Naive thymus-derived CD4-positive, alpha-beta T cell (primary cell): ENCODE measurements at regions of chr18 and their contacts with region 1.

Region 1: GRCh38 chr18:23619388-23619881 is 33.1 kb upstream of the NPC1 start:
- DNase-seq: peak in 2 of 9 donors; percentile 10 to 11
- ATAC-seq: peak; percentile 51
- H3K4me3 ChIP-seq: peak overlapping the region; percentile 35
- H3K4me3 Mint-ChIP-seq: peak overlapping the region in 9 of 10 donors; percentile 5 to 75 (median 48)
- H3K27ac ChIP-seq: no peak overlapping the region
- H3K27ac Mint-ChIP-seq: no peak overlapping the region
- H3K4me1 ChIP-seq: peaks cover 0 to 7% of the 10 kb centered on the region in 2 donors
- H3K4me1 Mint-ChIP-seq: peaks cover 0 to 16% (median 6%) of the 10 kb centered on the region in 7 donors
- H3K27me3 ChIP-seq: peaks cover 4 to 14% of the 10 kb centered on the region in 2 donors
- H3K27me3 Mint-ChIP-seq: peaks cover 33 to 54% (median 40%) of the 10 kb centered on the region in 5 donors

Region 2: DNA sequence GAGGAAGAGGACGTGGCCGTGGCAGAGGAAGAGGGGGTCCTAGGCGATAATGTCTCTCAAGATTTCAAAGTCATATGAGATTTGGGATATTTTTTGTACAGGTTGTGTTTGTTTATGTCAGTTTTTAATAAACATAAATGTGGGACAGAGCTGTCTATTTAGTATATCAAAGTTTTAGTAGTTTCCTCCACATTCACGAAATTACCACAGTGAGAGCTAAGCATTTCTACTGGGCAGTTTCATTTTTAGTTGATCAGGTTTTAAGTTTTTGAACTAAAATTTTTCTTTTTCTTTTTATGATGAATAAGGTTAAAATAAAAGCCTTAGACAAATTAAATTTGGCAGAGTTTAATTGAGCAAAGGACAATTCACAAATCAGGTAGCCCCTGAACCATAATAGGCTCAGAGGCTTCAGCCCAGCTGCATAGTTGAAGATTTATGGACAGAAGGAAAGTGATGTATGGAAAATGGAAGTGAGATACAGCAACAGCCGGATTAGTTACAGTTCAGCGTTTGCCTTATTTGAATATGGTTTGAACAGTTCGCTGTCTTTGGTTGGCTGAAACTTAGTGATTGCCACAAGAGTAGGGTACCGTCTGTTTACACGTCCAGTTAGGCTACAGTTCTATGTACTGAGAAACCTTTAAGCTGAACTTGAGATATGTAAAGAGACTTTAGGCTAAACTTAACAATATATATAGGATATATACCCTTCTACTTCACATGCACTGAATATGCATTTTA is 1990.2 kb before region 1 on chr18:
- CTCF ChIA-PET with region 1: no interaction called
- POLR2A ChIA-PET with region 1: no interaction called
- intact Hi-C with region 1: no loop called
- DNase-seq: no peak
- ATAC-seq: no peak
- H3K4me3 ChIP-seq: no peak overlapping the region
- H3K4me3 Mint-ChIP-seq: peak overlapping the region in 4 of 10 donors; percentile 4 to 50 (median 16)
- H3K27ac ChIP-seq: peak overlapping the region; percentile 50
- H3K27ac Mint-ChIP-seq: peak overlapping the region; percentile 11 to 93 (median 65)
- H3K4me1 ChIP-seq: peaks cover 0 to 10% of the 10 kb centered on the region in 2 donors
- H3K4me1 Mint-ChIP-seq: peaks cover 10 to 24% (median 18%) of the 10 kb centered on the region in 7 donors
- H3K27me3 ChIP-seq: no peaks in the 10 kb centered on the region
- H3K27me3 Mint-ChIP-seq: no peaks in the 10 kb centered on the region

Region 3: GRCh38 chr18:22475426-22476100 is 1143.9 kb before region 1 on chr18:
- CTCF ChIA-PET with region 1: no interaction called
- POLR2A ChIA-PET with region 1: no interaction called
- intact Hi-C with region 1: no loop called
- DNase-seq: no peak
- ATAC-seq: no peak
- H3K4me3 ChIP-seq: no peak overlapping the region
- H3K4me3 Mint-ChIP-seq: no peak overlapping the region
- H3K27ac ChIP-seq: no peak overlapping the region
- H3K27ac Mint-ChIP-seq: no peak overlapping the region
- H3K4me1 ChIP-seq: no peaks in the 10 kb centered on the region
- H3K4me1 Mint-ChIP-seq: no peaks in the 10 kb centered on the region
- H3K27me3 ChIP-seq: no peaks in the 10 kb centered on the region
- H3K27me3 Mint-ChIP-seq: peaks cover 0 to 24% (median 11%) of the 10 kb centered on the region in 5 donors

Region 4: GRCh38 chr18:23662309-23663263 is 43.2 kb after region 1 on chr18 and contains the start of gene ANKRD29:
- CTCF ChIA-PET with region 1: no interaction called
- POLR2A ChIA-PET with region 1: no interaction called
- intact Hi-C with region 1: loop called in 1 of 2 experiments (anchors 5 kb)
- DNase-seq: peak; percentile 27 to 61 (median 53)
- ATAC-seq: peak; percentile 83
- H3K4me3 ChIP-seq: peak within 1 kb of the TSS; percentile 65
- H3K4me3 Mint-ChIP-seq: peak within 1 kb of the TSS; percentile 85 to 97 (median 90)
- H3K27ac ChIP-seq: no peak within 1 kb of the TSS
- H3K27ac Mint-ChIP-seq: peak within 1 kb of the TSS; percentile 20 to 90 (median 79)
- H3K4me1 ChIP-seq: peaks cover 17 to 19% of the 10 kb centered on the region in 2 donors
- H3K4me1 Mint-ChIP-seq: peaks cover 19 to 39% (median 27%) of the 10 kb centered on the region in 7 donors
- H3K27me3 ChIP-seq: peaks cover 0 to 14% of the 10 kb centered on the region in 2 donors
- H3K27me3 Mint-ChIP-seq: peaks cover 21 to 79% (median 29%) of the 10 kb centered on the region in 5 donors
- total RNA-seq, gene ANKRD29: 0.11 to 0.24 (median 0.17) TPM in 3 of 5 experiments, not detected in the others

Region 5: DNA sequence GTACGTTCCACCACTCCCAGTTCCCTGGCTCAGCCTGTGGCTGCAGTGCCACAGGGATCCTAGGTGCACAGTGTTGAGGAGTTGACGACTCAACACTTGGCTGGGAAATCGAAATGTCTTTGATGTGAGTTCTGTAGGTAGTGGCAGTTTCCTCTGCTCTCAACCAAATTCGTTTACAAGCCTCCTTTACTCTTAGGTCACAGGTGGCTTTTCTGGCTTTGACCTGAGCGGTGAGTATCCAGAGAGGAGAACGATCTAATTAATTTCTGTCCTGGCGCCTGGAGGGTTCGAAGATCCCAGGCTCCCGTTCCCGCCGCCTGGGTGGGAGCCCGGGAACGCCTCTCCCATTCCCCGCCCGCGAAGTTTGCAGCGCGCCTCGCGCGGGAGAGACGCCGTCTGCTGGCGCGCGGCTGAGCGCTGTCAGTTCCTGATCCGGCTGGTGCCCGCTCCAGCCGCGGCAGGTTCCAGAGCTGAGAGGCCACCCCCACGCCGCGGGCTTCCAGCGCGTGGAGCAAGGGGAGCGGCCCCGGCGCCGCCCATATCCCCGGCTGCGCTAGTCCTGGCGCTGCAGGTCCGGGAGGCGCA is 69.7 kb after region 1 on chr18 and contains the start of gene LAMA3:
- CTCF ChIA-PET with region 1: interaction called, 8 read pairs
- POLR2A ChIA-PET with region 1: no interaction called
- intact Hi-C with region 1: loop called (anchors 1 to 5 kb)
- DNase-seq: peak in 8 of 9 donors; percentile 11 to 50 (median 39)
- ATAC-seq: peak; percentile 80
- H3K4me3 ChIP-seq: peak within 1 kb of the TSS; percentile 45
- H3K4me3 Mint-ChIP-seq: peak within 1 kb of the TSS; percentile 69 to 87 (median 80)
- H3K27ac ChIP-seq: no peak within 1 kb of the TSS
- H3K27ac Mint-ChIP-seq: peak within 1 kb of the TSS in 1 of 9 donors; percentile 28
- H3K4me1 ChIP-seq: peaks cover 9 to 18% of the 10 kb centered on the region in 2 donors
- H3K4me1 Mint-ChIP-seq: peaks cover 5 to 14% (median 8%) of the 10 kb centered on the region in 7 donors
- H3K27me3 ChIP-seq: peaks cover 10 to 11% of the 10 kb centered on the region in 2 donors
- H3K27me3 Mint-ChIP-seq: peaks cover 40 to 68% (median 47%) of the 10 kb centered on the region in 5 donors
- total RNA-seq, gene LAMA3: 0.22 TPM in 1 of 5 experiments, not detected in the others

Region 6: GRCh38 chr18:23703057-23703986 is 83.9 kb after region 1 on chr18:
- CTCF ChIA-PET with region 1: interaction called, 41 read pairs
- POLR2A ChIA-PET with region 1: no interaction called
- intact Hi-C with region 1: loop called (anchors 1 kb)
- DNase-seq: peak in 7 of 9 donors; percentile 18 to 62 (median 47)
- ATAC-seq: peak; percentile 77
- H3K4me3 ChIP-seq: no peak overlapping the region
- H3K4me3 Mint-ChIP-seq: no peak overlapping the region
- H3K27ac ChIP-seq: no peak overlapping the region
- H3K27ac Mint-ChIP-seq: no peak overlapping the region
- H3K4me1 ChIP-seq: no peaks in the 10 kb centered on the region
- H3K4me1 Mint-ChIP-seq: no peaks in the 10 kb centered on the region
- H3K27me3 ChIP-seq: no peaks in the 10 kb centered on the region
- H3K27me3 Mint-ChIP-seq: peaks cover 8 to 65% (median 21%) of the 10 kb centered on the region in 5 donors

Region 7: GRCh38 chr18:23918401-23919032 is 299.1 kb after region 1 on chr18:
- CTCF ChIA-PET with region 1: no interaction called
- POLR2A ChIA-PET with region 1: no interaction called
- intact Hi-C with region 1: loop called (anchors 1 to 2 kb)
- DNase-seq: peak; percentile 47 to 74 (median 61)
- ATAC-seq: peak; percentile 87
- H3K4me3 ChIP-seq: no peak overlapping the region
- H3K4me3 Mint-ChIP-seq: no peak overlapping the region
- H3K27ac ChIP-seq: no peak overlapping the region
- H3K27ac Mint-ChIP-seq: peak overlapping the region in 3 of 9 donors; percentile 20 to 63 (median 62)
- H3K4me1 ChIP-seq: peaks cover 8 to 15% of the 10 kb centered on the region in 2 donors
- H3K4me1 Mint-ChIP-seq: peaks cover 10 to 31% (median 25%) of the 10 kb centered on the region in 7 donors
- H3K27me3 ChIP-seq: no peaks in the 10 kb centered on the region
- H3K27me3 Mint-ChIP-seq: peaks cover 0 to 27% (median 5%) of the 10 kb centered on the region in 5 donors

Region 8: GRCh38 chr18:24212939-24213338 is 593.5 kb after region 1 on chr18:
- CTCF ChIA-PET with region 1: no interaction called
- POLR2A ChIA-PET with region 1: no interaction called
- intact Hi-C with region 1: no loop called
- DNase-seq: no peak
- ATAC-seq: no peak
- H3K4me3 ChIP-seq: no peak overlapping the region
- H3K4me3 Mint-ChIP-seq: no peak overlapping the region
- H3K27ac ChIP-seq: no peak overlapping the region
- H3K27ac Mint-ChIP-seq: no peak overlapping the region
- H3K4me1 ChIP-seq: no peaks in the 10 kb centered on the region
- H3K4me1 Mint-ChIP-seq: no peaks in the 10 kb centered on the region
- H3K27me3 ChIP-seq: no peaks in the 10 kb centered on the region
- H3K27me3 Mint-ChIP-seq: peaks cover 0 to 14% (median 0%) of the 10 kb centered on the region in 5 donors